ENCODE measurements at regions of chr9 and their contacts with region 1.

Region 1: DNA sequence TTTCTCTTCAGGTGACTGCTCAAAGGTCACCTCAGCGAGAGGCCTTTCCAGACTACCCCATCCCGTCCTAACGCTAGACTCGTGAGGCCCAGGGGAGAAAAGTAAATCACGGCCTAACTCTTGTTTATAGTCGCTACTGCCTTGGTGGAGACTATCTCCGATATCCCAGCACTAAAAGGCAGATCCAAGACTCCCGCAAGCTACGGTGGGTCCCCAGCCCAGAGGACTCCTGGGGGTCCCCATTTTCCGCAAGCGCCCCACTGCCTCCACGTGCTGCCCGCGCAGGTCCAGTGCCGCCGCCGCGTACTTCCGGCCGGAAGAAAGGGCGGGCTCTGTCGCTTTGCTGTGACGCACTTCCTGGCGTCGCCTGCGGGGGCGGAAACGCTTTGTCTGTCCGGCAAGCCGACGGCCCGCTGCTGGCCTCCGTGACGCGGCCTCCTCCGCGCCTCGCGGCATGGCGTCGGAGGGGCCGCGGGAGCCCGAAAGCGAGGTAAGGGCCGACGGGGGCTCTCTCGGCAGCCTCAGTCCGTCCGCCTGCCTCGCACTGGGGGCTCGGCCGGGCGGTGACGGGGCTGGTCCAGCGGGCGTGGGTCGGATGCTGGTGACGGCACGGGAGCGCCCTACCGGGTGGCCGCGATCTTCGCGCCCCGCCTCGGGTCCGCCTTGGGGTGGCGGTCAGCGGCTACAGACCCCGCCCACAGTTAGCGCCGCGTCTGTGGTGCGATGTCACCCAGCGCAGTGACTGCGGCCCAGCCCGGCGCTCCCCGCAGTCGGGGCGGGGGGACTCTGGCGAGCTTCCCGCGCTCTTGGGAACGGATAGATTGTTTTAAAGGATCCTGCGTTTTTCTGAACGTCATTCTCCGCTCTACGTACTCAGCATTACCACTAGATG is at the start of gene SECISBP2:
- DNase-seq: peak; percentile 92 to 95
- ATAC-seq: peak; percentile 90 to 93
- H3K4me3 ChIP-seq: peak within 1 kb of the TSS; percentile 69 to 83 (median 80)
- H3K27ac ChIP-seq: peak within 1 kb of the TSS; percentile 87 to 99 (median 98)
- H3K4me1 ChIP-seq: peaks cover 39 to 40% of the 10 kb centered on the region in 2 donors
- H3K27me3 ChIP-seq: no peaks in the 10 kb centered on the region
- CTCF ChIP-seq: peak; percentile 62 to 73 (median 66)
- POLR2A ChIP-seq: peak; percentile 96 to 97
- total RNA-seq, gene SECISBP2: 40.2 to 70.8 (median 54.9) TPM

Region 2: DNA sequence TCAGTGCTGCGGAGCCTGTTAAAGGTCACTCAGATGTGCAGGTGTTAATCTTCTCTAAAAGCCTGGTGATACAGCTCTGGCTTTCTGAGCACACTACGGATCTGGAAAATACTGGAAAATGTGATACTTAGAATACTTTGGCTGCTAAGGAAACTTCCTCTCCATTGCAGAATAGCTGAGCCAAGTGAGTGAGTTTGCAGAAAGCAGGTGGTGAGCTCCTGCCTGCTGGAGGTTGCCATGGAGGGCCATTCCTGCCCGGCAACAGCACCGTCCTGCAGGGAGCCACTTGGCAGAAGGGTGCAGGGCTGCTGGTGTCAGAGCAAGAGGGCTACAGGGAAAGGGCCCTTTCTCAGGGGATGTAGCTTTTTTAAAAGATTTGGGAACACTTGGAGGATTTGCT is 40.6 kb after region 1 on chr9:
- in situ Hi-C with region 1: no loop called
- intact Hi-C with region 1: loop called (anchors 5 kb)
- DNase-seq: peak; percentile 63 to 86
- ATAC-seq: peak; percentile 66 to 79
- H3K4me3 ChIP-seq: no peak overlapping the region
- H3K27ac ChIP-seq: peak overlapping the region; percentile 68 to 87 (median 78)
- H3K4me1 ChIP-seq: peaks cover 27 to 41% of the 10 kb centered on the region in 2 donors
- H3K27me3 ChIP-seq: no peaks in the 10 kb centered on the region
- CTCF ChIP-seq: no peak
- POLR2A ChIP-seq: no peak